GM10248 (cell line): ENCODE measurements at regions of chr12 and their contacts with region 1.

Region 1: DNA sequence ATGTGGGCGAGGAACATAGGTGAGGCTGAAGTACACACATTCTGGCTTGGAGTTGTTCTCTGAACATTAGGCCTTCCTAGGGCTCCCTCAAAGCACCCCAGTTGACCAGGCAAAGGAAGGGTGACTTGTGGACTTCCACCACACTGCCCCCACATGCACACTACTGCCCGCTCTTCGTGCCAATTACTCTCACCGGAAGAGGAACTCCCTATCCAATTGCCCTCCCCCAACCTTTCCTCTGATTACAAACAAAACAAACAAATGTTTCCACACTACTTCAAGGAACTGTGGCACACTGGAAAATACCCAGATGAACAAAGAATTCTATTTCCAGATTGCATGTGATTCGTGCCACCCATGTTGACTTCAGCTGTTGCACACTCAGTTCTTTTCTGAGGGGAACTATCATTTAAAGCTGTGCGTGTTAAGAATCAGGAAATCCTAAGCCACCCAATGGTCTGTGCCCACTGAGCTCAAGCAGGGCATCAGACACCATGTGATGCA is 139.3 kb downstream of the SSPN start:
- DNase-seq: no peak
- CTCF ChIP-seq: no peak

Region 2: GRCh38 chr12:26346700-26347099 is 12.0 kb after region 1 on chr12:
- CTCF ChIA-PET with region 1: interaction called, 17 read pairs
- POLR2A ChIA-PET with region 1: no interaction called
- DNase-seq: no peak
- CTCF ChIP-seq: no peak

Region 3: DNA sequence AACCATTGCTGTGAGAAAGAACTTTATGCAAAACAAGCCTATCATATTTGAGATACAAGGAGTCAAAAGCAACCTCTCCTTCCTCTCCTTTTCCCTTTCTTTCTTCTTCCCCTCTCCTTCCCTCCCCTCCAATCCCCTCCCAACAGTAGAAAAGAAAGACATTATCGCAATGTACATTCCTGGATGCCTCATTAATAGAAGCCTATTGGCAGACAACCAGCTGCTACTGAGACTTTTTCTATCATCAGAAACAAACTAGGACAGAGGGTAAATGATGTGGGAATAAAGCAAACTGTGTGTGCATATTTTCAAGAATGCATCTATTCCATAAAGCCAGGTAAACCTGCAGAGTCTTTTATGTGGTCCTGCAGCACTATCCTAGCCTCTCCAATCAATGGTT is 261.1 kb after region 1 on chr12:
- CTCF ChIA-PET with region 1: no interaction called
- POLR2A ChIA-PET with region 1: no interaction called
- DNase-seq: no peak
- CTCF ChIP-seq: no peak